Gastrocnemius medialis (tissue), 4 donors: ENCODE measurements at regions of chr7 and their contacts with region 1.

Region 1: GRCh38 chr7:80428161-80429054 is 83.5 kb downstream of the GNAT3 start:
- DNase-seq: peak in 1 of 2 donors; percentile 33
- ATAC-seq: peak; percentile 95 to 97
- H3K4me3 ChIP-seq: peak overlapping the region in 1 of 4 donors; percentile 7
- H3K27ac ChIP-seq: no peak overlapping the region
- H3K4me1 ChIP-seq: no peaks in the 10 kb centered on the region
- H3K27me3 ChIP-seq: no peaks in the 10 kb centered on the region
- CTCF ChIP-seq: peak; percentile 65 to 85 (median 74)
- POLR2A ChIP-seq: no peak

Region 2: DNA sequence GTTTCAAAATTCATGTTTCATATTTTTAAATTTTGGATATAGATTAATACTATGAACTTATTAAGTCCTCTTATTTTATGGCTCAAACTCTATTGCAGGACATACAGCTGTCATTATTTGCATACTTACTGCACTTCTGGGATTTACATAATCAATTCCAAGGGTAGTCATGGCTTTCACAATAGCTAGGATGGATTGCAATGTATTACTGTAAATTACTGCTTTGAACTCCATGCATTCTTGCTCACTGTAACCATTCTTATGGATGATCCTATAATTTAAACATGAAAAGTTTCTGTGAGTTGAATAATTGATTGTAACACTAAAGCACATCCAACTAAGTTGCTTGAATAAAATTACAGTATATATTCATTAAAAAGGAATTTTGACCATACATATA is 60.0 kb after region 1 on chr7:
- in situ Hi-C with region 1: no loop called
- intact Hi-C with region 1: no loop called
- DNase-seq: no peak
- ATAC-seq: no peak
- H3K4me3 ChIP-seq: no peak overlapping the region
- H3K27ac ChIP-seq: peak overlapping the region in 1 of 4 donors; percentile 59
- H3K4me1 ChIP-seq: peaks cover 18 to 19% of the 10 kb centered on the region in 2 donors
- H3K27me3 ChIP-seq: no peaks in the 10 kb centered on the region
- CTCF ChIP-seq: no peak
- POLR2A ChIP-seq: no peak

Region 3: GRCh38 chr7:80681272-80681885 is 253.0 kb after region 1 on chr7:
- in situ Hi-C with region 1: no loop called
- intact Hi-C with region 1: loop called (anchors 5 kb)
- DNase-seq: no peak
- ATAC-seq: peak in 1 of 2 donors; percentile 71
- H3K4me3 ChIP-seq: no peak overlapping the region
- H3K27ac ChIP-seq: peak overlapping the region in 1 of 4 donors; percentile 37
- H3K4me1 ChIP-seq: peaks cover 8 to 15% of the 10 kb centered on the region in 2 donors
- H3K27me3 ChIP-seq: no peaks in the 10 kb centered on the region
- CTCF ChIP-seq: peak in 4 of 5 experiments; percentile 19 to 51 (median 34)
- POLR2A ChIP-seq: no peak